Posterior cingulate gyrus (tissue), 11 donors: ENCODE measurements at regions of chrX and their contacts with region 1.

Region 1: DNA sequence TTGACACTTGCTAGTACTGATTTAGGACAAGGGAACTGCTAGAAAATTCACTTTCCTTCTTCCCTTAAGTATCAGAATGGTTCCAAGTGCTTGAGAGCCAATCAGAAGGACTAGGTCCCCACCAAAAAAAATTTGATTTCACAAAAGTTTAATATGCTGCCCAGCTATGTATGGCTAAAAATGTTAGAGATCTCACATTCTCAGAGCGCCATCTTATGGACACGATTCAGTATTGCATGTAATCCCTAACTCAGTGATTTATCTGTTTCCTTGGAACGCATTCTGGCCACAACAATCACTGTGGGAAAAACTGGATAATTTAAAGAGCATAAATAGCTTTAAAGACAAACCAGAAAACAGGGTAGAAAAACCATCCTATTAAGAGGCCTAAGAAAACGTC is 255.1 kb upstream of the GPC4 start:
- DNase-seq: peak in 1 of 10 donors; percentile 27

Region 2: GRCh38 chrX:132968296-132968949 is 702.0 kb before region 1 on chrX:
- intact Hi-C with region 1: loop called (anchors 10 kb)
- DNase-seq: no peak

Region 3: DNA sequence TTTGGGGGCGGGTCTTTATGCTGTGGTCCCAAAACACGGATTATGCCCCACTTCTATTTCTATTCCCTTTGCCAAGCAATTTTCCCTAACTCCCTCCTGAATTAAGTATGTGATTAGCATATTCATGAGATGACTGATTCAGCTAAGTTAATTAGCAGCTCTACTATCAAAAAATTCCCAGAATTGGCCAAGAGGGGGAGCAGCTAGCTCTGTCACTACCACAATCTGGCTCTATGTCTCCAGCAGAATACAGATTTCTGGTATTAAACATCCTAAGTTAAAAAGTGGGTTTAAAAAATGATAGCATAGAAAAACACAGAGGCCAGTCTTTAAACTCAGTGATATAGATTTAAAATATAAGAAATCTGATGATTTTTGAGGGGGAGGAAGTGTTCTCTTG is 335.4 kb before region 1 on chrX:
- intact Hi-C with region 1: loop called (anchors 10 kb)
- DNase-seq: peak in 3 of 10 donors; percentile 7 to 15 (median 8)

Region 4: GRCh38 chrX:133516656-133517055 is 153.7 kb before region 1 on chrX:
- intact Hi-C with region 1: no loop called
- DNase-seq: no peak